Activated T-helper 2 cell treated with anti-CD3 and anti-CD28 coated beads, Interferon-gamma antibody, Interleukin-2, Interleukin-4, amounts not matched to agents 10 μg/mL and 5 μg/mL and 100 μg/mL, durations not matched to agents 14 hours and 24 hours and 36 hours (primary cell): ENCODE measurements at regions of chr6 and their contacts with region 1.

Region 1: DNA sequence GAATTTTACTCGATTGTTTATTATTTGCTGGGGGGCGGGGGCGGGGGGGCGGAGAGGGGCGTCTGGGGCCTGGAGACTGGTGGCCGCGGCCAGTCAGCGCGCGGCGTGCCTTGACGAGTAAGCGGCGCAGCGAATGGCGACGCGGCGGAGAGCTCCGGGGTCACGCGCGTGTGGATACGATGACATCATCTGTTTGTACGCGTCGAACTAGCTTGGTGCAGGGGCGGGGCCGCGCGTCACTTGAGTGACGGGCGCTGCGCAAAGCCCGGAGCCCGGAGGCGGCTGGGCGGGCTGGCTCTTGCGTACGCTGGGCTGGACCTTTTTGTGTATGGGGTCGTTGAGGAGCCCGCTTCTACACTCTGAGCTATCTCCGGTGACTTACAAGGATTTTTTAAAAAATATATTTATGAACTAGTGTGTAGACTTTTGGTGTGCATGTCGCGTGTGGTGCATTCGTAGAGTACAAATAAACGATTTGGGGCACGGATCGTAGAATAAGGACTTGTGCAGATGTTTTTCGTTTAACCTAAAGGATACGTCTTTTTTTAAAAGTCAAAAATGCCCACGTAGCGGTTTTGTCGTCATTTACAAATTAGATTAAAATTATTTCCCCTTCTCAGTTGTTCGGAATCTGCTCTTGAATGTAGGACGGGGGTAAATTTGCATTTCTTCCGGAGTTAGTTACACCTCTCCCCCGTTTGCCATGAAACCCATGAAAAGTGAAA is 2.2 kb upstream of the FOXO3 start:
- DNase-seq: peak; percentile 95
- H3K4me3 Mint-ChIP-seq: peak overlapping the region; percentile 87
- H3K27ac Mint-ChIP-seq: peak overlapping the region; percentile 93
- H3K4me1 Mint-ChIP-seq: peaks cover 16% of the 10 kb centered on the region
- H3K27me3 Mint-ChIP-seq: peaks cover 46% of the 10 kb centered on the region

Region 2: DNA sequence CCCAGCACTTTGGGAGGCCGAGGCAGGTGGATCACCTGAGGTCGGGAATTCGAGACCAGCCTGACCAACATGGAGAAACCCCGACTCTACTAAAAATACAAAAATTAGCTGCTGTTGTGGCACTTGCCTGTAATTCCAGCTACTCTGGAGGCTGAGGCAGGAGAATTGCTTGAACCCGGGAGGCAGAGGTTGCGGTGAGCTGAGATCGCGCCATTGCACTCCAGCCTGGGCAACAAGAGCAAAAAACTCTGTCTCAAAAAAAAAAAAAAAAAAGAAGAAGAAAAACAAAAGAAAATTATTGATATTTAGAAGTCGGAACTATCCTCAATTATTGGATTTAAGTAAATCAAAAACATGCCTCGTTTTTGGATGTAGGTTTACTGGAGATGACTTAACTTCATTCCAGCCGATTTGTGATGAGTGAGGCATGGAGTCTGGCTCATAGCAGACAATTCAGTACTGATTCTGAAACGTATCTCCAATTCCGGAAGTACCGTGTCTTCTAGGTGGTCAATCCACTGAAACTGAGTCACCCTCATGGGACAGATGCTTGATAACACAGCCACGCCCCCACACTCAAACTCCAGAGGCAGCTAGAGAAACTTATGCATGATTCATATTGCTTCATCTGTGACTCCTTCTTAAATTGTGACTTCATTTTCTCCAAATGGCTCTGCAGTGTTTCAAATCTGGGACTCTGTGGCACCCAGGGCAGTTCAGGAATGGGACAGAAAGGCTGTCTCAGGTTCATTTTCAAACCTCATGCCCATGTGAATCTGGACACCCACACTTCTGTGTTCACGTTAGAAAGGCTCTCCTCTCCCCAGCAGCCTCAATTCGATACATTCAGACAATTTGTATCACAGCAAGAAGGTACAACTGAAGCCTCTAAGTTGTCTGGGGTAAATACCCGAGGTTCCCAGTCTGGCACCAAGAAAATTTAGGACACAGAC is 179.3 kb after region 1 on chr6:
- intact Hi-C with region 1: loop called (anchors 5 kb)
- DNase-seq: peak; percentile 13
- H3K4me3 Mint-ChIP-seq: no peak overlapping the region
- H3K27ac Mint-ChIP-seq: no peak overlapping the region
- H3K4me1 Mint-ChIP-seq: peaks cover 9% of the 10 kb centered on the region
- H3K27me3 Mint-ChIP-seq: peaks cover 36% of the 10 kb centered on the region

Region 3: DNA sequence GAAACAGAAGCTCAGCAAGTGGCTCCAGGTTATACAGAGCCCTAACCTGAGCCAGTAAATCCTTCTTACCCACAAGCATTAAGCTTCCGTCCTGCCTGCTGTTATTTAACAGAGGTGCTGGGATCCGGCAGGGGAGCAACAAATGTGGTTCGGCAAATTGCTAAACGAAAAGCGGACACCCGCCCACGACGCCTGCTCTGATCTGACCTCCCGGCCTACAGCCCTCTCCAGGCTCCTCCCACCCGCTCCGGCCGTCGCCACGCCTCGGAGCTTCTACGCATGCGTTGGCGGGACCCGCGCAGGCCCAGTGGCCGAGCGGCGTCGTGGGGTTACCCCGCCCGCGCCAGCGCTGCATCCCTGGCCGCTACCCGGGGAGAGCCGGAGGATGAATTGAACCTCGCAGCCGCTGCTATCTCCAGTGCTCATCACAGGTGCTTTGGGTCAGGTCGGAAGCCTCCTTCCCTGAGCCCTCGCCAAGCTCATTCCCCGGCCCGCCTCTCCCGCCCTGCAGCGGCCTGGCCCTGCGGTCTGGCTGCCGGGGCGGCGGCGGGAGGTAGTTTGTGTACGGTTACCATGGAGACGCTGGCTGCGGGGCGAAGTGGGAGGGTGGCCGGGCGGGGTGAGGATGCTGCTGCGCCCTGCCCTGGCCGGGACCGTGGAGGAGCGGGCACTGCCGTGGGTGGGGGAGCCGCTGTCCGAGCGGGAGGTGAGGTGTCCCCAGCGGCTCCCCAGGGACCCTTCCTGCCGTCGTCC is 289.8 kb after region 1 on chr6 and contains the start of gene ARMC2:
- intact Hi-C with region 1: loop called (anchors 5 kb)
- DNase-seq: peak; percentile 85
- H3K4me3 Mint-ChIP-seq: peak within 1 kb of the TSS; percentile 81
- H3K27ac Mint-ChIP-seq: peak within 1 kb of the TSS; percentile 42
- H3K4me1 Mint-ChIP-seq: peaks cover 22% of the 10 kb centered on the region
- H3K27me3 Mint-ChIP-seq: peaks cover 28% of the 10 kb centered on the region
- total RNA-seq, gene ARMC2: 1.9 and 2.7 TPM in 2 replicates

Region 4: DNA sequence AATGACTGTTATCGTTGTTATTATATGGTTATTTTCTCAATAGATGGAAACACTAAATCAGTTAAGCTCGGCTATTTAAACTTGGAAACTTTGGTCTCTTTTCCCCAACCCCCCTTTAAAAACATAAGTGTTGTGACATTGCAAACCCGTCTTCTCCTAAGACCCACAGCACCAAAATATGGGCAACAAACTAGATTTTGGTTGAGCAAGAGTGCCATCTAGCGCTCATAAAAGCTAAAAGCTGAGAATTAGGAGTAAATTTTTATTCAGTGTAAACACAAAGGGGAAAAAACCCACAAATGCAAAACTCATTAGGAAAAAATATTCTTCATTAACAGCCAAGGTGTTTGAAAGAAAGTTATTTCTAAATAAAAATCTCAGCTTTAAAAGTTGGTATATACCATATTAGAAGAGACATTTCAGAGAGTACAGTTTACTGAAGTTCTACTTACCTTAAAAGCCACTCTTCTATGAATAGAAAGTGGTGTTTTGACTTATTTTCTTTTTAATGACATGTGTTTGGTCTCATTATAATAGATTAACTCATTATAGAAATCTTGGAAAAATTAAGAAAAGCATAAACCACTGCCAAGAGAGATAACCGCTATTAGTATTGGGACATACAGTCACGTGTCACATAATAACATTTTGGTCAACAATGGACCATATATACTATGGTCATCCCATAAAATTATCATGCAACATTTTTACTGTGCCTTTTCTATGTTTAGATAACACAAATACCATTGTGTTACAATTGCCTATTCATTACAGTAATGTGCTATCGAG is 515.0 kb after region 1 on chr6:
- intact Hi-C with region 1: loop called (anchors 5 kb)
- DNase-seq: no peak
- H3K4me3 Mint-ChIP-seq: no peak overlapping the region
- H3K27ac Mint-ChIP-seq: no peak overlapping the region
- H3K4me1 Mint-ChIP-seq: peaks cover 21% of the 10 kb centered on the region
- H3K27me3 Mint-ChIP-seq: peaks cover 5% of the 10 kb centered on the region

Region 5: GRCh38 chr6:109690737-109691621 is 1132.4 kb after region 1 on chr6 and contains the starts of genes AK9 and FIG4:
- intact Hi-C with region 1: loop called (anchors 2 kb)
- DNase-seq: peak; percentile 84
- H3K4me3 Mint-ChIP-seq: peak within 1 kb of the TSS; percentile 96
- H3K27ac Mint-ChIP-seq: peak within 1 kb of the TSS; percentile 86
- H3K4me1 Mint-ChIP-seq: peaks cover 26% of the 10 kb centered on the region
- H3K27me3 Mint-ChIP-seq: peaks cover 10% of the 10 kb centered on the region
- total RNA-seq, gene AK9: 3.1 and 3.8 TPM in 2 replicates
- total RNA-seq, gene FIG4: 8.8 and 9.5 TPM in 2 replicates